ENCODE measurements at regions of chr20 and their contacts with region 1.

Region 1: GRCh38 chr20:46558511-46558959 is 8.1 kb upstream of the OCSTAMP start:
- DNase-seq: peak; percentile 66
- H3K4me3 Mint-ChIP-seq: no peak overlapping the region
- H3K27ac Mint-ChIP-seq: no peak overlapping the region
- H3K4me1 Mint-ChIP-seq: peaks cover 6% of the 10 kb centered on the region
- H3K27me3 Mint-ChIP-seq: peaks cover 29% of the 10 kb centered on the region
- CTCF ChIP-seq: no peak

Region 2: GRCh38 chr20:46520976-46521579 is 37.5 kb before region 1 on chr20:
- CTCF ChIA-PET with region 1: interaction called, 3 read pairs
- intact Hi-C with region 1: loop called (anchors 5 kb)
- DNase-seq: peak; percentile 79
- H3K4me3 Mint-ChIP-seq: no peak overlapping the region
- H3K27ac Mint-ChIP-seq: no peak overlapping the region
- H3K4me1 Mint-ChIP-seq: no peaks in the 10 kb centered on the region
- H3K27me3 Mint-ChIP-seq: peaks cover 59% of the 10 kb centered on the region
- CTCF ChIP-seq: peak; percentile 86

Region 3: GRCh38 chr20:46582648-46583047 is 24.1 kb after region 1 on chr20:
- CTCF ChIA-PET with region 1: interaction called, 13 read pairs
- intact Hi-C with region 1: no loop called
- DNase-seq: no peak
- H3K4me3 Mint-ChIP-seq: no peak overlapping the region
- H3K27ac Mint-ChIP-seq: no peak overlapping the region
- H3K4me1 Mint-ChIP-seq: no peaks in the 10 kb centered on the region
- H3K27me3 Mint-ChIP-seq: peaks cover 15% of the 10 kb centered on the region
- CTCF ChIP-seq: no peak

Region 4: GRCh38 chr20:46622125-46622524 is 63.6 kb after region 1 on chr20:
- CTCF ChIA-PET with region 1: no interaction called
- intact Hi-C with region 1: no loop called
- DNase-seq: no peak
- H3K4me3 Mint-ChIP-seq: no peak overlapping the region
- H3K27ac Mint-ChIP-seq: no peak overlapping the region
- H3K4me1 Mint-ChIP-seq: no peaks in the 10 kb centered on the region
- H3K27me3 Mint-ChIP-seq: peaks cover 64% of the 10 kb centered on the region
- CTCF ChIP-seq: no peak

Region 5: DNA sequence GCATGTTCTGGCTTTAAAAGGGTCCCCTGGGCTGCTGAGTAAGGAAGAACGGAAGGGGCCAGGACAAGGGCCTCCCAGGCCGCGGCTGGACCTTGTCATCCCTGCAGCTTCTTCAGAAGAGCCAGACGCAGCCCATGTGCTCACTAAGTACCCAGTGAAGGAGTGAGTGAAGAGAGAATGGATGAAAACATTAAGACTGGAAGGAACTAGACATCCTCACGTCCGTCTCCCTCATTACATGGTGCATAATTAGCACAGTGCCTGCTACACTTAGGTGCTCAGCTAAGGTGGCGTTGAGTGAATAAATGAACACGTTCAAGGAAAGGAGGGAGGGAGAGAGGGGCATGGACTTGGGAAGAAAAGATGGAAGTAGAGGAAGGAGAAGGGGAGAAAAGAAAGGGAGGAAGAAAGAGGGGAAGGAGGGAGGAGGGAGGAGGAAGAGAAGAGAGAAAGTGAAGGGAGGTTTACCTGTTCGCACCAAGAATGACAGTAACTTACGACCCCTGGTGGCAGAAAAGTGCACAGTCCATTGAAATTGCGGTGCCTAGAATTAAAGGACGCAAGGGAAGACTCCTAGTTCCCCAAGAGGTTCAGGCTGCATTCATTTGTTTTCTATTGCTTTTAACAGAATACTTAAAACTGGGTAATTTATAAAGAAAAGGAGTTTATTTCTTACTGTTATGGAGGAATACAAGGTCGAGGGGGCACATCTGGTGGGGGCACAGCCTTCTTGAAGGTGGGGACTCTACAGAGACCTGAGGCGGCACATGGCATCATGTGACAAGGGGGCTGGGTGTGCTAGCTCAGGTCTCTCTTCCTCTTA is 122.7 kb after region 1 on chr20:
- CTCF ChIA-PET with region 1: interaction called, 5 read pairs
- intact Hi-C with region 1: loop called (anchors 1 kb)
- DNase-seq: peak; percentile 89
- H3K4me3 Mint-ChIP-seq: no peak overlapping the region
- H3K27ac Mint-ChIP-seq: no peak overlapping the region
- H3K4me1 Mint-ChIP-seq: peaks cover 18% of the 10 kb centered on the region
- H3K27me3 Mint-ChIP-seq: no peaks in the 10 kb centered on the region
- CTCF ChIP-seq: peak; percentile 88

Measured in Calu3 (cell line).